ENCODE measurements at regions of chr3 and their contacts with region 1.

Region 1: DNA sequence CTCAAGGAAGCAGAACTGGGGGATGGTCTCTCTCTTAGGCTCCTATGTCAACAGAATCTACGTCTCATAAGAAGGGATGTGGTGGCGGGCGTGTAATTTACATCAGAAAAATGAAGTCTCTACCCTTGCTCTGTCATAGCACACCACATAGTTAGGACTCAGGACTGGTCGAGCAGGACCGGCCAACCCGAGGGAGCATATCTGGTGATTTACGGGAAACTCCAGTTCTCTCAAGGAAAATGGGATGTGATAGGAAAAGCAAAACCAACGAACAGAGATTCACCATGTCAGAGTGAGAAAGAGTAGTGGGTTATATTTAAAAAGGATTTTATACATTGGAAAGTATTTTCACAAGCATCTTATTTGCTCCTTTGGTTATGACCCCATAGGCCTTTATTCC is 54.7 kb downstream of the IGF2BP2 start:
- DNase-seq: peak in 1 of 2 experiments; percentile 45
- H3K4me3 ChIP-seq: no peak overlapping the region
- H3K27ac ChIP-seq: no peak overlapping the region
- H3K4me1 ChIP-seq: peaks cover 2 to 23% (median 5%) of the 10 kb centered on the region in 4 experiments; a peak in 5 of 7 replicates
- H3K27me3 ChIP-seq: no peaks in the 10 kb centered on the region
- CTCF ChIP-seq: no peak
- EP300 ChIP-seq: no peak
- POLR2A ChIP-seq: no peak
- RAD21 ChIP-seq: no peak

Region 2: GRCh38 chr3:185651971-185652370 is 118.1 kb before region 1 on chr3:
- CTCF ChIA-PET with region 1: no interaction called
- POLR2A ChIA-PET with region 1: no interaction called
- DNase-seq: no peak
- H3K4me3 ChIP-seq: no peak overlapping the region
- H3K27ac ChIP-seq: no peak overlapping the region
- H3K4me1 ChIP-seq: peaks cover under 1 to 6% (median 1%) of the 10 kb centered on the region in 4 experiments
- H3K27me3 ChIP-seq: no peaks in the 10 kb centered on the region
- CTCF ChIP-seq: no peak
- EP300 ChIP-seq: no peak
- POLR2A ChIP-seq: no peak
- RAD21 ChIP-seq: no peak

Region 3: GRCh38 chr3:185781759-185782158 is 11.7 kb after region 1 on chr3:
- CTCF ChIA-PET with region 1: interaction called, 40 read pairs
- POLR2A ChIA-PET with region 1: interaction called, 4 read pairs
- DNase-seq: no peak
- H3K4me3 ChIP-seq: no peak overlapping the region
- H3K27ac ChIP-seq: no peak overlapping the region
- H3K4me1 ChIP-seq: peaks cover 7 to 40% (median 26%) of the 10 kb centered on the region in 4 experiments; a peak in 6 of 7 replicates
- H3K27me3 ChIP-seq: no peaks in the 10 kb centered on the region
- CTCF ChIP-seq: no peak
- EP300 ChIP-seq: no peak
- POLR2A ChIP-seq: no peak
- RAD21 ChIP-seq: no peak

Region 4: DNA sequence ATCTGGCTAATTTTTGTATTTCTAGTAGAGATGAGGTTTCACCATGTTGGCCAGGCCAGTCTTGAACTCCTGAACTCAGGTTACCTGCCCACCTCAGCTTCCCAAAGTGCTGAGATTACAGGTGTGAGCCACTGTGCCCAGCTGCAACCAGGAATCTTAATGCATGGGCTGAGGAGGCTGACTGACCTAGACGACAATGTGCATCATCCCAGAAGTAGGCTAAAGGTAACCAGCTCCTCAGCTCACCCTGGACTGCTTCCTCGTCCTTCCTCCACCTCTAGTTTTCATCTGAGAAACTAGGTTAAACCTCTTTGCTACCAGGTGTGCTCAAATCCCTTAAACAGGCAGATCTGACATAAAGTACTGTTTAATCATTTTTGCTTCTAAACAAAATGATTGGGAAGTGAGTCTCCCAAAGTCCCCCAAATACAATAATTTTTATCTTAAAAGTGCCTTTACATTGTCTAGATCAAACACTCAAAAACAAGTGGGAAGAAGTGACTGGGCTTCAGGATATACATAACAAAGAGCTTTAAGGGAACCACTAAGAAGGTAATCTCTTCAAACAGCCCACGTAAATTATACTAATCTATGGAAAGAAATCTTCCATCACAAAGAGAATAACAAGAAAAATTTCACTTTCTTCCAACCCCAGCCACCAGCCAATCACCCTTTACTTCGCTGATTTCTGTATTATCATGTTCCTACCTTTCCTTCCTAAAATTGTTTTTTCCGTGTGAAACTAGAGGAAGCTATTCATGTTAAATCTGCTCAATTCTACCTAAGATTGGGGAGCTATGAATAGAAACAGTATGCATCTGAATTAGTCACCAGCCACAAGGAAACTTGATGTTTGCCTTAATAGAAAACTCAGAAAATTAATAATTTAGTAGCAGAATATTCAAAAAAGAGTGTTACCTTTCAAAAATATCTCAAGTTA is 20.1 kb after region 1 on chr3:
- CTCF ChIA-PET with region 1: interaction called, 17 read pairs
- POLR2A ChIA-PET with region 1: interaction called, 4 read pairs
- DNase-seq: no peak
- H3K4me3 ChIP-seq: peak overlapping the region in 1 of 4 experiments; percentile 33; a peak in 1 of 8 replicates
- H3K27ac ChIP-seq: no peak overlapping the region
- H3K4me1 ChIP-seq: peaks cover 3 to 37% (median 30%) of the 10 kb centered on the region in 4 experiments; a peak in 6 of 7 replicates
- H3K27me3 ChIP-seq: no peaks in the 10 kb centered on the region
- CTCF ChIP-seq: no peak
- EP300 ChIP-seq: no peak
- POLR2A ChIP-seq: no peak
- RAD21 ChIP-seq: no peak

Measured in H1 (cell line).